ENCODE measurements at regions of chr1 and their contacts with region 1.

Region 1: GRCh38 chr1:172917972-172918371 is 132.8 kb downstream of the TNFSF18 start:
- DNase-seq: peak; percentile 56
- H3K4me3 Mint-ChIP-seq: no peak overlapping the region
- H3K27ac Mint-ChIP-seq: no peak overlapping the region
- H3K4me1 Mint-ChIP-seq: peaks cover 25% of the 10 kb centered on the region
- H3K27me3 Mint-ChIP-seq: no peaks in the 10 kb centered on the region
- CTCF ChIP-seq: no peak

Region 2: DNA sequence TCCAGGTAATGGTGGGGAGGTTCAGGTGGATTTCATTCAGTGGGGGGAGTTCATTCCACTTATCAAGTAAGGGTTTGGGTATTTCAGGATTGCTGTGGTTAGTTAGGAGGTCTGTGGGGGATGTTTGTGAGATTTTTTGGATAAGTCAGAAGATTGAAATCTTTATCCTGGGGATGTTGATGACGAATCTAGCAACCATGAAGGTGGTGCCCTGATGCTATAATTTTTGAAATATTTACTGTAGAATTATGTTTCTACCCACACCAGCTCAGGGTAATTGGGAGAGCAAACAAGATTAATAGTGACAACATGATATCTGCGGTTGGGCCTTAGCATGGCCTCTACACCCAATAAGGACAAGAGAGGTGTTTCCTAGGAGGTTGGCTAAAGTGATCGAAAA is 356.7 kb before region 1 on chr1:
- CTCF ChIA-PET with region 1: no interaction called
- intact Hi-C with region 1: no loop called
- DNase-seq: no peak
- H3K4me3 Mint-ChIP-seq: no peak overlapping the region
- H3K27ac Mint-ChIP-seq: no peak overlapping the region
- H3K4me1 Mint-ChIP-seq: no peaks in the 10 kb centered on the region
- H3K27me3 Mint-ChIP-seq: no peaks in the 10 kb centered on the region
- CTCF ChIP-seq: no peak

Region 3: GRCh38 chr1:172906778-172907592 is 11.0 kb before region 1 on chr1:
- CTCF ChIA-PET with region 1: interaction called, 10 read pairs
- intact Hi-C with region 1: no loop called
- DNase-seq: peak; percentile 45
- H3K4me3 Mint-ChIP-seq: peak overlapping the region; percentile 24
- H3K27ac Mint-ChIP-seq: peak overlapping the region; percentile 93
- H3K4me1 Mint-ChIP-seq: peaks cover 65% of the 10 kb centered on the region
- H3K27me3 Mint-ChIP-seq: no peaks in the 10 kb centered on the region
- CTCF ChIP-seq: no peak